Activated naive CD4-positive, alpha-beta T cell treated with anti-CD3 and anti-CD28 coated beads for 36 hours (primary cell): ENCODE measurements at regions of chr1 and their contacts with region 1.

Region 1: GRCh38 chr1:221435504-221435904 is 306.4 kb downstream of the DUSP10 start:
- DNase-seq: no peak
- H3K4me3 Mint-ChIP-seq: no peak overlapping the region
- H3K27ac Mint-ChIP-seq: no peak overlapping the region
- H3K4me1 Mint-ChIP-seq: peaks cover 34% of the 10 kb centered on the region
- H3K27me3 Mint-ChIP-seq: peaks cover 4% of the 10 kb centered on the region

Region 2: DNA sequence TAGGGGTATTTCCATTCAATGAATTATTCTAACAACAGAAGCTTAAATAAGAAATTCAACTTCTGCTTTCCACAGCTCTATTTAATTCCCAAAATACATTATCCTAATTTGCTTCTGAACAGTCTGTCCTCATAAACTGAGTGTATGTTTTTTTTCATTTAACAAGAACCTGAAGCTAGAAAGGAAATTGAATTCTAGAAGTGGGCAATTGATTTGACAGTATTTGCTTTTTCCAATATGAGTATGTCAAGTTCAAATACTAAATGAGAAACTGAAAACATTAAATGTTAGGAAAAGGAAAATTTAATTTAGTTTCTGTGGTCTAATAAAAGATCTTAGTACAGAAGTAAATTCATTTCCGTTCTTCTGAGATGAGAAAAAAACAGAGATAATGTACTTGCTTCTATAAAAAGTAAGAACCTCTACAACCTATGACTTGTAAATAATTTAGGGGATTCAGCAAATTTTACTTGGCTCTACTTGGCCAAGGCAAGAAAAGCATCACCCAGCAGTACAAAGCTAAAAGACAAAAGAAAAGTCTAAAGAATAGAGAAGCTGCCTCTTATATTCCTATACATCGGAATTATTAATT is 1194.3 kb before region 1 on chr1:
- CTCF ChIA-PET with region 1: no interaction called
- intact Hi-C with region 1: loop called (anchors 2 kb)
- DNase-seq: no peak
- H3K4me3 Mint-ChIP-seq: no peak overlapping the region
- H3K27ac Mint-ChIP-seq: no peak overlapping the region
- H3K4me1 Mint-ChIP-seq: peaks cover 45% of the 10 kb centered on the region
- H3K27me3 Mint-ChIP-seq: no peaks in the 10 kb centered on the region

Region 3: DNA sequence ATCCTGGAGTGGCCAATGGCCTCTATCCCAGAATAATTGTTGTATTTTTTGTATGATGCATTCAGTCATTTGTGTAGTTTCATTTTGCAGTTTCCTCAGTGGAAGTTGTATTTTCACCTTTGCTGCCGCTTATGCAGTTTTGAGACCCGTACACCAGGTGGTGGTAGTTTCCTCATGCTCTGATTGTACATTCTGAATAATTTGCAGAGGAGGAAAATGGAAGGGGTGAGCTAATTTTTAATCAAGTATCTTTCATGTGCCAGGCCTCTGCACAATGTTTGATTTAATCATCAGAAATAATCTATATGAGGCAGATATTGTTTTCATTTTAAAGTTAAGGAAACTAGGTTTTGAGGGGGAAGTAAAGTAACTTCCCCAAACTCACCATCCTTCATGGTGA is 526.7 kb before region 1 on chr1:
- CTCF ChIA-PET with region 1: no interaction called
- intact Hi-C with region 1: loop called (anchors 1 kb)
- DNase-seq: no peak
- H3K4me3 Mint-ChIP-seq: no peak overlapping the region
- H3K27ac Mint-ChIP-seq: no peak overlapping the region
- H3K4me1 Mint-ChIP-seq: no peaks in the 10 kb centered on the region
- H3K27me3 Mint-ChIP-seq: peaks cover 9% of the 10 kb centered on the region

Region 4: GRCh38 chr1:221478050-221478949 is 42.8 kb after region 1 on chr1:
- CTCF ChIA-PET with region 1: interaction called, 8 read pairs
- intact Hi-C with region 1: loop called (anchors 1 kb)
- DNase-seq: peak; percentile 74
- H3K4me3 Mint-ChIP-seq: no peak overlapping the region
- H3K27ac Mint-ChIP-seq: no peak overlapping the region
- H3K4me1 Mint-ChIP-seq: peaks cover 2% of the 10 kb centered on the region
- H3K27me3 Mint-ChIP-seq: peaks cover 5% of the 10 kb centered on the region

Region 5: GRCh38 chr1:221753828-221754188 is 318.3 kb after region 1 on chr1:
- CTCF ChIA-PET with region 1: no interaction called
- intact Hi-C with region 1: loop called (anchors 1 kb)
- DNase-seq: no peak
- H3K4me3 Mint-ChIP-seq: no peak overlapping the region
- H3K27ac Mint-ChIP-seq: peak overlapping the region; percentile 82
- H3K4me1 Mint-ChIP-seq: peaks cover 37% of the 10 kb centered on the region
- H3K27me3 Mint-ChIP-seq: peaks cover 2% of the 10 kb centered on the region

Region 6: GRCh38 chr1:221839796-221840395 is 404.4 kb after region 1 on chr1:
- CTCF ChIA-PET with region 1: no interaction called
- intact Hi-C with region 1: loop called (anchors 1 kb)
- DNase-seq: peak; percentile 87
- H3K4me3 Mint-ChIP-seq: no peak overlapping the region
- H3K27ac Mint-ChIP-seq: peak overlapping the region; percentile 9
- H3K4me1 Mint-ChIP-seq: peaks cover 35% of the 10 kb centered on the region
- H3K27me3 Mint-ChIP-seq: peaks cover 5% of the 10 kb centered on the region